ENCODE measurements at regions of chr2 and their contacts with region 1.

Region 1: DNA sequence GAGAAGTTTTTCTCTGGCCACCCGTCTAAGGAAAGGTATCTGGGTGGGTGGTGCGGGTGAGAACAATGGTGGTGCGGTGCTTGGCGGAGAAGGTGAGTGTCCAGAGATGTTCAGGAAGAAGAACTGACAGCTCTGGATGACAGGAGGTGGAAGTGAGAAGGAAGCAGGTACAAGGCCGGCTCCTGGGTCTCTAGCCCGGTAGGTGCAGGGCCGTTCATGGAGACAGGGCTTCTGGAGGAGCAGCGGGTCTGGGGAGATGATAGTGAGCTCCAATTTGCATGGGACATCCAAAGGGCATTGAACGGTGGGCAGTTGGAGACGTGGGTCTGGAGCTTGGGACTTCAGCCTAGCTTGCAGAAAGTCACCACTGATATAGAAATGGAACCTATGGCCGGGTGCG is 979 bp upstream of the FAHD2B start:
- DNase-seq: no peak
- ATAC-seq: no peak
- H3K4me3 ChIP-seq: peak overlapping the region; percentile 33
- H3K27ac ChIP-seq: no peak overlapping the region
- H3K4me1 ChIP-seq: peaks cover 2 to 5% of the 10 kb centered on the region in 2 experiments; a peak in 3 of 5 replicates
- H3K27me3 ChIP-seq: 0 out of 5 replicates have a peak, but pooled peaks cover 0 to 4% of the 10 kb centered on the region in 2 experiments
- CTCF ChIP-seq: no peak
- EP300 ChIP-seq: no peak
- POLR2A ChIP-seq: no peak
- RAD21 ChIP-seq: no peak

Region 2: DNA sequence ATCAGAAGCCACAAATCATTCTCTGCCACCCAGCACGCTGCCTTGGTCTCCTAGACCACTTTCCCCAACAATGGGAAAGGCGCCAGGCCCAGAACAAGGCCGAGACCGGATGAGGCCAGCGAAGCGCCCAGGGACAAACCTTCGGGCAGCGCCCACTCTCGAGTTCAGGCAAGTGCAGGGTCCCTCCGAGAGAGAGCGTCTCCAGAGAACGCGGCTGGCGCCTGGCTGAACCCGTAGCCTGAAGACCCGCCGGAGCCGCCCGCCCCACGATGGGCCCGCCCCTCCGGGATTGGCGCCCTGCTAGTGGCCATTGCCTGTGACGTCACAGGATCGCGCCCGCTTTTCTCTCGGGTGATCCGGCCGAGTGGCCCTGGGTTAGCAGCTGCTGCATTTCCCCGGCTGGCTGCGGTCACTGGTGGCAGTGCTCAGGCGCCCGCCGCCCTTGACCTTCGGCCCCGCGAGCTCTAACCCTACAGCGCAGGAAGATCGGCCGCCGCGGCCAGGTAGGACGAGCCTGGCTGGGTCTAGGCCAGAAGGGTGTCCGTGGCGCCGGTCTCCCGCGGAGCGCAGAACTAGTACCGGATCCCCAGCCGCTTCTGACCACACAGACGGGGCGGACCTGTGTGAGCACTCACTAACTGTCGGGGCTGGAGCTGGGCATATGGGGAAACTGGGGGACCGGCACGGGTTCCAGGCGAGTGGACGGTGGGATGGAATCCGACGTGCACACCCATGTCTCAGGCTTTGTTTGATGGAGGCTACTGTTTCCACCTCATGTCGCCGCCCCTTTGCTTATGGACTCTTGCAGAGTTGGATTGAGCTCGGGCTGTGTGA is 1693.1 kb before region 1 on chr2 and contains the start of gene FAHD2A:
- CTCF ChIA-PET with region 1: no interaction called
- POLR2A ChIA-PET with region 1: no interaction called
- in situ Hi-C with region 1: loop called (anchors 10 kb)
- intact Hi-C with region 1: no loop called
- DNase-seq: peak; percentile 96 to 99 (median 98)
- ATAC-seq: peak; percentile 95
- H3K4me3 ChIP-seq: peak within 1 kb of the TSS; percentile 94
- H3K27ac ChIP-seq: peak within 1 kb of the TSS; percentile 80
- H3K4me1 ChIP-seq: peaks cover 10 to 12% of the 10 kb centered on the region in 2 experiments; a peak in 4 of 5 replicates
- H3K27me3 ChIP-seq: no peaks in the 10 kb centered on the region
- CTCF ChIP-seq: 0 out of 6 replicates have a peak, but pooled peaks of 1 of the 3 experiments have one; percentile 2
- EP300 ChIP-seq: no peak
- POLR2A ChIP-seq: peak; percentile 92
- RAD21 ChIP-seq: no peak
- polyA plus RNA-seq, gene FAHD2A: 13.8 to 21.0 TPM

Region 3: DNA sequence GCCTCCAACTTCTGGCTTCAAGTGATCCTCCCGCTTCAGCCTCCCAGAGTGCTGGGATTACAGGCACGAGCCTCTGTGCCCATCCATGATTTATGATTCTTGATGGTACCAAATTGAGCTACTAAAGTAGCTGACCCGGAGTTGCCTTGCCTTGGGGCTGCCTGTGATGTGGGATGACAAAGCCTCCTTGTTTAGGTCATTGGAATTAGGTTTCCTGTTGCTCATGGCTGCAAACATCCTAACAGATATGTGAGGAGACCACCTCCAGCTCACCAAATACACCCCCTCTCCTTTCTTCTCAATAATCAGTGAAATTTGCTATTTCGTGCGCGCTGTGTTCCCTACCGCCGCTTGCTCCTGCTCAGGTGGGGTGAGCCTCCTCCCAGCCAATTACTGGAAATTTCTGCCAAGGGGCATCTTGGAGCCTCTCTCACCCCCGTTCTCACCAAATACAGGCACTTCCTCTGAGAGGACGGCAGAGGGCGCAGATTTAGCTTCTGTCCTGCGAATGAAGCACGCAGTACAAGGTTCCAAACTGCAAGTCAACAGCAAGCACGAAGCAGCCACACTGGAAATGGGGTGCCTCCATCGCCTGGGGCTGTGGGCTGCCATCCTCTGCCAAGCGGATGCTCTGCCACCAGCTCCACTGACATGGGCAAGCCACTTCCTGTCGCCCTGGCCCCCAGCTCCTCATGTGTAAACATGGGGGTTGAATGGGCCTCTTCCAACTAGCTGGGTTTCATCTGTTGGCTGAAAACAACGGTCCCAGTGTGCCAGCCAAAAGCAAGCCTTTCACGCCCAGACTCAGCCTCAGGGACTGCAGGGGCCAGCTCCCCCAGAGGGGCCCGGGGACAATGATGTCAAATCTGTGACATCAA is 688.4 kb before region 1 on chr2:
- CTCF ChIA-PET with region 1: no interaction called
- POLR2A ChIA-PET with region 1: no interaction called
- in situ Hi-C with region 1: no loop called
- intact Hi-C with region 1: no loop called
- DNase-seq: peak; percentile 66 to 78 (median 71)
- ATAC-seq: peak; percentile 88
- H3K4me3 ChIP-seq: no peak overlapping the region
- H3K27ac ChIP-seq: no peak overlapping the region
- H3K4me1 ChIP-seq: peaks cover 12 to 13% of the 10 kb centered on the region in 2 experiments; a peak in 4 of 5 replicates
- H3K27me3 ChIP-seq: peaks cover 13 to 31% of the 10 kb centered on the region in 2 experiments; a peak in 3 of 5 replicates
- CTCF ChIP-seq: peak; percentile 84 to 89 (median 87)
- EP300 ChIP-seq: no peak
- POLR2A ChIP-seq: no peak
- RAD21 ChIP-seq: peak; percentile 64 to 73

Region 4: DNA sequence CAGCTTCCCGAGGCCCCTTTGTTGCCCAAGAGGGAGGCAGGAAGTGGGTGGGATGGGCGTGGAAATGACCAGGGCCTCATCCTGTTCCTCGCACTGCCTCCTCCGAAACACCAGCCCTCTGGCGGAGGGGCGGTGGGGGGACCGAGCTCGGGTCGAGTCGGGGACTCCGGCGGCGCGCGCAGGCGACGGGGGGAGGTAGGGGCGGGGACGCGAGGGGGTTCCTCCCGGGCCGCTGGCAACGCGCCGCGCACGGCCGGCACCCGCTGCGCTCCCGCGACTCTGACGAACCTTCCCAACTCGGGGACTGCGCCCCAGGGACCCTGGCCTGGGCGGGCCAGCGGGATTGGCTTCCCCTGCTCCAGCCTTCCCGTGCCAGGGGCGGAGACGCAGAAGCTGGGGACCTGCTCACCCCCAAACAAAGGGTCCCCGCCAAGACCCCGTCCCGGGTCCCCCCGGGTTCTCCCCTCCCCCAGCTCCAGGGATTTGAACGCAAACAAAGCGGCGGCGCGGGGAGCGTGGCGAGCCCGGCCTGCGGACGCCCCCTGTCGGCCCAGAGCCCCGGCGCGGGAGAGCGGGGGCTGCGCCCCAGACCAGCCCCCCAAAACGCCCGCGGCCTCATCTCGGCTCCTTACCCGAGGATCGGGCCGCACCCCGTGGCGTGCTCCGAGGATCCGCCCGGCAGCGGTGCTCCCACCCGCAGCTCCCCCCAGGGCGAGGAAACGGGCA is 226.9 kb before region 1 on chr2:
- CTCF ChIA-PET with region 1: no interaction called
- POLR2A ChIA-PET with region 1: no interaction called
- in situ Hi-C with region 1: loop called (anchors 25 kb)
- intact Hi-C with region 1: no loop called
- DNase-seq: peak; percentile 88 to 94 (median 90)
- ATAC-seq: peak; percentile 78
- H3K4me3 ChIP-seq: peak overlapping the region; percentile 97
- H3K27ac ChIP-seq: peak overlapping the region; percentile 95
- H3K4me1 ChIP-seq: peaks cover 27 to 89% of the 10 kb centered on the region in 2 experiments
- H3K27me3 ChIP-seq: no peaks in the 10 kb centered on the region
- CTCF ChIP-seq: peak; percentile 59 to 72 (median 62); a peak in 5 of 6 replicates
- EP300 ChIP-seq: no peak
- POLR2A ChIP-seq: peak; percentile 61; the same call in 1 of the 2 replicates
- RAD21 ChIP-seq: peak in 1 of 2 experiments; percentile 34; a peak in 2 of 4 replicates

Region 5: DNA sequence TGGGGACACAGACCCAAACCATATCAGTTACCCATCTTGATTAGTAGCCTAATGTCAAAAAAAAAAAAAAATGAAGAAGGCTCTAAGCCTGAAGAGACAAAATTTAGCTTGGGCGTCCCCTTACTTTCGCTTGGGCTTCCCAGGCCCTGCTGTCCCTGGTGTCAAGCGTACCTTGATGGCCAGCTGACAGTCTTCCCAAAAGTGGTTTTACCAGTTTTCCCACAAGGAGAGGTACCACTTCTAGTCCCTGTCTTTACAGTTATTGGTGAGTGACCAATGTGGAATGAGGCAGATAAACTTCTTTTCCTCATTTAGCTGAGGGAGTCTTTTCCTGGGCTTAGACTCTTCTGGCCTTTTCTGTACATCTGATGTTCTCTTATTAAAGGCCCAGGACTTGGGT is 103.4 kb before region 1 on chr2:
- CTCF ChIA-PET with region 1: no interaction called
- POLR2A ChIA-PET with region 1: no interaction called
- in situ Hi-C with region 1: loop called (anchors 10 kb)
- intact Hi-C with region 1: no loop called
- DNase-seq: no peak
- ATAC-seq: no peak
- H3K4me3 ChIP-seq: no peak overlapping the region
- H3K27ac ChIP-seq: no peak overlapping the region
- H3K4me1 ChIP-seq: no peaks in the 10 kb centered on the region
- H3K27me3 ChIP-seq: peaks cover 32 to 50% of the 10 kb centered on the region in 2 experiments
- CTCF ChIP-seq: no peak
- EP300 ChIP-seq: no peak
- POLR2A ChIP-seq: no peak
- RAD21 ChIP-seq: no peak

Region 6: DNA sequence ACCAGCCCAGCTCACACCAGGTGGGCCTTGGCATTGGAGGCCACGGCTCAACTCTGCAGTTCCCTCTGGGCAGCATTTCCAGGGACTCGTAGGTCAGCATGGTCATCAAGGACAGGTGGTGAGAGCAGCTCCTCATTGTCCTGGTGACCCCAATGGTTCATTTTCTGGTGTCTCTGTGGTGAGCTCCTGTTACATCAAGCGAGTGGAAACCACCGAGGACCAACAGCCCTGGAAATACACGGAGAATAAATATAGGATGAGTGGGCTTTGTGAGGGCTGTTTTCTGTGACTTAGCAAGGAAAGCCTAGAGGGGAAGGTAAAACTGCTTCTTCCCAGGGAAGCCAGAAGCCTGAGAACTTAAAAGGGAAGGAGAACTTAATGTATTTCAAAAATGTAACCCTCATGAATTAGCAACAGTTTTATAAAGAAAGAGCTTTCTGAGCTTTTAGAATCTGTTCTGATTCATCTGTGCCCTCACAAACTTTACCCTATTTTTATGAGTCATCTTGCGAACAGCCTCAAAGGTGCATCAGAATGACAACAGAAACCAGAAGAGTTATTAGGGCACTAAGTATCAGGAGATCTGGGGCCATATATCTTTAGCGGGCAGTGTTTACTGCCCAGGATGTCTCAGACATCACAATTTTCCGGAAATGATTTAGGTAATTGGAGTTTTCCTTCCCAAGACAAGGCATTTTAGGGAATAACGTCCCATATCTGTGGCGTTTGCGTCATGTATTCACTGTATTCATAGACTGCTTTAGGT is 592.6 kb after region 1 on chr2:
- CTCF ChIA-PET with region 1: no interaction called
- POLR2A ChIA-PET with region 1: no interaction called
- in situ Hi-C with region 1: no loop called
- intact Hi-C with region 1: no loop called
- DNase-seq: no peak
- ATAC-seq: no peak
- H3K4me3 ChIP-seq: no peak overlapping the region
- H3K27ac ChIP-seq: no peak overlapping the region
- H3K4me1 ChIP-seq: peaks cover 0 to 3% of the 10 kb centered on the region in 2 experiments; a peak in 1 of 5 replicates
- H3K27me3 ChIP-seq: no peaks in the 10 kb centered on the region
- CTCF ChIP-seq: no peak
- EP300 ChIP-seq: no peak
- POLR2A ChIP-seq: no peak
- RAD21 ChIP-seq: no peak

Measured in K562 (cell line).